ENCODE measurements at regions of chr9 and their contacts with region 1.

Region 1: DNA sequence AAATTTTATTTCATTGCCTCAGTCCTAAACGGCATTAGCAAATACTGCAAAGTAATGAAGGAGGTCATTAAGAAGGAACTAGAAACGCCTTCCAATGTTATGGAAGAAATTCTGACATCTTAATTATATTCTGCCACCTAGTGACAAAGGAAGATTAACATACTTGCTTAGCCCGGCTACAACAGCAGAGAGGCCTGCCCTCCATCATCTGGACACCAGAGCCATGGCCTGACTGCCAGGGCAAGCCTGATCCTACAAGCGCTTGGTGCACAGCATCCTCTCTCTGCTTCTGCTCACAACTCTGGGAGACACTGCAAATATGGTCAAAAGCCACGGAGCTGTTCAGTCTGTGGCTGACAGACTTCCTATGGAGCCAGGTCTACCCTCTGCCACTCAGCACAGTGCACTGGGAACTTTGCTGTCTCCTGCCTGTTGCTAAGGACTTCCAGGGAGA is 87.3 kb upstream of the SLC44A1 start:
- DNase-seq: peak; percentile 63
- H3K4me3 ChIP-seq: no peak overlapping the region
- H3K27ac ChIP-seq: no peak overlapping the region
- H3K4me1 ChIP-seq: no peaks in the 10 kb centered on the region
- H3K27me3 ChIP-seq: no peaks in the 10 kb centered on the region
- CTCF ChIP-seq: peak; percentile 22 to 40
- POLR2A ChIP-seq: no peak

Region 2: DNA sequence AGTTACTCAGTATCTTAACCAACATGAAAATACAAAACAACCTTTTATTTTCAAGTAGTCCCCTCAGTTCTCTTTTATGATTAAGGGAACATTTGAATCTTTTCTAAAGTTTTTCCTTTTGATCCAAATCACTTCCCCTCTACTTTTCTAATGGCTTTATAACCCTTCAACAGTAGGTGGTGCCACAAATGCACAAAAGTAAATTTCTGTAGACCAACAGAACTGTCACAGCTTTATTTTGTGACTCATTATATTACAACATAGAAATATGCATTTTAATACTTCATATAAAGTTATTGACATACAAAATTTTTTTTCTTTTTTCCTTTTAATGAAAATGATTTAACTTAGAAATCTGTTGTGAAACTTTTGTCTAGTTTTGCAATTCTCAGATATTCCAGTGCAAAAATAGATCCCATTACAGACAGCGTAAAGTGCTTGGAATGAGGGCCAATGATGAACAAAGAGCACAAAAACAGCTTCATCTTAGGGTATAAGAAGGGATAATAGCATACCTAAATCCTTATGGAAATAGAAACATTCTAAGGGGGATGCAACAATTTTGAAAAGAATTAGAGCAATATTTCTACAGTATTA is 376.3 kb before region 1 on chr9:
- CTCF ChIA-PET with region 1: interaction called, 12 read pairs
- POLR2A ChIA-PET with region 1: no interaction called
- dilution Hi-C with region 1: no loop called
- intact Hi-C with region 1: loop called (anchors 1 kb)
- DNase-seq: peak; percentile 29
- H3K4me3 ChIP-seq: no peak overlapping the region
- H3K27ac ChIP-seq: no peak overlapping the region
- H3K4me1 ChIP-seq: no peaks in the 10 kb centered on the region
- H3K27me3 ChIP-seq: peaks cover 0 to 5% of the 10 kb centered on the region in 2 experiments
- CTCF ChIP-seq: peak; percentile 16 to 23
- POLR2A ChIP-seq: no peak

Region 3: GRCh38 chr9:104808035-104808614 is 349.0 kb before region 1 on chr9:
- CTCF ChIA-PET with region 1: interaction called, 4 read pairs
- POLR2A ChIA-PET with region 1: no interaction called
- dilution Hi-C with region 1: no loop called
- intact Hi-C with region 1: loop called (anchors 1 kb)
- DNase-seq: peak; percentile 46
- H3K4me3 ChIP-seq: no peak overlapping the region
- H3K27ac ChIP-seq: no peak overlapping the region
- H3K4me1 ChIP-seq: no peaks in the 10 kb centered on the region
- H3K27me3 ChIP-seq: no peaks in the 10 kb centered on the region
- CTCF ChIP-seq: peak; percentile 24 to 48
- POLR2A ChIP-seq: no peak

Region 4: DNA sequence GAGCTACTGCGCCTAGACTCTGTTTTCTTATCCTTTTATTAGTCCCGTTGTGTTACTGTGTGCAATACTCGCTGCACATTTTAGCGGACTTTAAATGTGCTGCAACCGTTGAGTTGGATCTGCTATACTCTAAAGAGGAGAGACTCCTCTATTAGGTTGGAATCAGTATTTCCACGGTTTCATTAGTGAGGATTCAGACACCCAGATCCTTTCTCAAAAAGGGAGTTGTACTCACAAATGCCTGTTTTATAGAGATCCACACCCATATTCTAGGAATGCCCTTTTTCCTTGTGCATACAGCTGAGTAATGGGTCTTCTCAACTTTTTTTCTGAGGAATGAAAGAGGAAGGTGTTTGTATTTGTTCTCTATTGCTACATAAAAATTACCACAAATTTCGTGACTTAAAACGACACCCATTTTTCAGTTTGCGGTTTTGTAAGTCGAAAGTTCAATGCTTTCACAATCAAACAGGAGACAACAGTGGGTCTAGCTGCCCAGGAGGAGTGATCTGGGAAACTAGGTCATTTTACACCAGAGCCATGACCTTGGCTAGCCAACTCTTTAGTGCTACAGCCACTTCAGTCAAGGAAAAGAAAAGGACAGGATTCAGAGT is 34.5 kb after region 1 on chr9:
- CTCF ChIA-PET with region 1: no interaction called
- POLR2A ChIA-PET with region 1: no interaction called
- dilution Hi-C with region 1: no loop called
- intact Hi-C with region 1: no loop called
- DNase-seq: no peak
- H3K4me3 ChIP-seq: no peak overlapping the region
- H3K27ac ChIP-seq: no peak overlapping the region
- H3K4me1 ChIP-seq: peaks cover 2% of the 10 kb centered on the region
- H3K27me3 ChIP-seq: no peaks in the 10 kb centered on the region
- CTCF ChIP-seq: no peak
- POLR2A ChIP-seq: no peak

Region 5: DNA sequence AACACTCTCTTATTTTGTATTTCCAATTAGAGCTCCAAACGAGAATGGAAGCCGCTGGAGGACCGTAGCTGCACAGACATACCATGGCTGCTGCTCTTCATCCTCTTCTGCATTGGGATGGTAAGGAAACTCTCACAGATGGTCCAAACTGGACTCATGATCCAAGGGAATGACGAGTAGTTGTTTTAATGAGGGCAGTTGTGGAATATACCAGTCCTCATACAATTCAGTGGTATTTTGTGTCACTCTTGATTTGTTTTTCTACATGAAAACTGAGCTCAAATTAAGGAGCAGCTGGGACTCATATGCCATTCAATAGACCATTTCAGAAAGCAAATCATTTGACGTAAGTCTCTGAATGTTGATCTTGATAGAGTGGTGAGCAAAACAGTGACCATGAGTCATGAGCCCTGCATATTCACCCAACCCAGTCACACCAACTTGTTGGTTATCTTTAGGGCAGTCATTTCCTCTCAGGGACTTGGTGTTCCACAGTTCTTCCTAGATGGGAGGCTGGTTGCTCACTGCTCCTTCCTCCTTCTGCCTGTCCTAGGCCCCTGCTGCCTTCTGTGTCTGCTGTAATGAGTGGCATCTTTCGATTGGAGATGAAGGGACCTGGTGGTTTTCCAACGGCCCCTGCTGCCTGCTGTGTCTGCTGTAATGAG is 142.2 kb after region 1 on chr9:
- CTCF ChIA-PET with region 1: no interaction called
- POLR2A ChIA-PET with region 1: no interaction called
- dilution Hi-C with region 1: no loop called
- intact Hi-C with region 1: no loop called
- DNase-seq: peak; percentile 98
- H3K4me3 ChIP-seq: no peak overlapping the region
- H3K27ac ChIP-seq: peak overlapping the region; percentile 96
- H3K4me1 ChIP-seq: peaks cover 45% of the 10 kb centered on the region
- H3K27me3 ChIP-seq: no peaks in the 10 kb centered on the region
- CTCF ChIP-seq: no peak
- POLR2A ChIP-seq: peak; percentile 69